Posterior vena cava (tissue), 2 donors: ENCODE measurements at regions of chr9 and their contacts with region 1.

Region 1: GRCh38 chr9:17294822-17295624 is 160.2 kb downstream of the CNTLN start:
- DNase-seq: no peak

Region 2: DNA sequence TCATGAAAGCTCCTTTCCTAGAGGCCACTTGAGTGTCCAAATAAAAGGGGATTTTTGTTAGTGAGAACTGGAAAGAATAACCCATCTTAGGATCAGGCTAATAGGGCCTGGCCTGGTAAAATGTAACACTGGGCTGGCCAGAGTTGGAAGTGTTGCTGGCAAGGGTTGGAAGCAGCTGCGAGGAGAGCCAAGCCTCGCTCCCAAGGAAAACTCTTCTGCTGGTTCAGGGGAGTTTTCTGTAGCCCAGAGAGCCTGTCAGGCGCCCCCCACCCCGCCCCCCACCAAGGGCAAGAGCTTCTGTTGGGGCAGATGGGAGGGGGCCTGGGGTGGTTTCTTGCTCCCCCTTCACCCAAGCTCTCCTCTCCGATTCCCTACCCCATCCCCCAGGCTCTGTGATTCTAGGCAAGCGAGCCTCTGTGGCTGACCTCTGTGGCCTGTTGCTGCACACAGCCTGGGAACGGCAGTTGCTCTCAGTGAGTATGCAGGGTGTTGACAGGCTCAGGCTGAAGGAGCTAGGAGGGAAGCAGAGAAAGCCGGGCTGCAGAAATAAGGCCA is 1194.4 kb before region 1 on chr9:
- intact Hi-C with region 1: no loop called
- DNase-seq: peak; percentile 92

Region 3: DNA sequence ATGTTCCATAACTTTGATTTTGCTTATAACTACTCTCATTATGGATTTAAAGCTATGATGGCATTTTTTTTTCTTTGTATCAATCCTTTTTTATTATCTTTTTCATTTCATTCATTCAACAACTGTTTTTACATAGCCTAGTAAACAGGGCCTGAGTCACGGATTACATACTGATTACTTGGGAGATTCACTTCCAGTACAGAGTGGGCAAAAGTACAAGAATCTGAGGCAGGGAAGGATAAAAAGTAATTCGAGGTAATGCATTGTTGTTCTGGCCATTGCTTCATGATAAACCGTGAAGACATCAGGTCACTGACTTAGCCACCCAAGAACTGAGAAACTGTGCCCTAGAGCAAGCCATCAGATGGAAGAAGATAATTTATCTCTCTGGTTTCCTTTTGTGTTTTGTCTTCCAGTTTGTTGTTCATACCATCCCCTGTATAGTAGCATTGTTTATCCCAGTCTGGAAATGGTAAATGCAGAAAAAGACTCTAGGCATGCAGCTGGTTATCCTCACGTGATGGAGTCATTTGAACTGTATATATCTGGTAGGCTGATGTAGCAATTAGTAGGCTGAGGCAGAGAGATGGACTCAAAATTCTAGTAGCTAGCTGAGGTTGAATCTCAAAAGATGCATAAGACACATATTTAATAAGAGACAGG is 14.5 kb before region 1 on chr9:
- intact Hi-C with region 1: loop called in 1 of 2 experiments (anchors 2 kb)
- DNase-seq: no peak